CD8-positive, alpha-beta T cell (primary cell): ENCODE measurements at regions of chr17 and their contacts with region 1.

Region 1: GRCh38 chr17:64420143-64420971 is 28.6 kb upstream of the MILR1 start:
- DNase-seq: peak in 5 of 9 experiments; percentile 27 to 85 (median 62)
- ATAC-seq: peak; percentile 88
- H3K4me3 ChIP-seq: no peak overlapping the region
- H3K4me3 Mint-ChIP-seq: no peak overlapping the region
- H3K27ac ChIP-seq: no peak overlapping the region
- H3K27ac Mint-ChIP-seq: no peak overlapping the region
- H3K4me1 ChIP-seq: peaks cover 4% of the 10 kb centered on the region
- H3K4me1 Mint-ChIP-seq: peaks cover 2% of the 10 kb centered on the region
- H3K27me3 ChIP-seq: no peaks in the 10 kb centered on the region
- H3K27me3 Mint-ChIP-seq: no peaks in the 10 kb centered on the region
- CTCF ChIP-seq: peak; percentile 80

Region 2: DNA sequence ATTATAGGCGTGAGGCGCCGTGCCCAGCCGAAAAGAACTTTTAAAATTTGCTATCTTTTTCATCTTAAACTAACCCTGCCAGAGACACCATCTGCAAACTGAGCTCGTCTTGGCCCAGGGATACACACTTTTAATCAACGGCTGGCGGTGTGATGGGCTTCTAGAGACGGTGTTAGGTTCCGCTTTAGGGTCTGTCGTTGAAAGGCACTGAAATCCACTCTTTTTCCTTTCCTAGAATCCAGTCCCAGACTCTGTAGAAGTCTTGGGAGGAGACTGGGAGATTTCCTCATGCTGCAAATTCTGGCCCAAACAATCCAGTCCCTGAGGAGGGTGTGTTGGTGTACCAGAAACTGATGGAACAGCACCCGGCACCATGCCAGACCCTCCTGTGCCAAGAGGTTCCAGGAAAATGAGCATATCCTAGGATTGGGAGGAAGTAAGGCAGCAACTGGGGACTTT is 105.3 kb before region 1 on chr17:
- CTCF ChIA-PET with region 1: interaction called, 271 read pairs
- POLR2A ChIA-PET with region 1: no interaction called
- intact Hi-C with region 1: no loop called
- DNase-seq: no peak
- ATAC-seq: no peak
- H3K4me3 ChIP-seq: no peak overlapping the region
- H3K4me3 Mint-ChIP-seq: no peak overlapping the region
- H3K27ac ChIP-seq: no peak overlapping the region
- H3K27ac Mint-ChIP-seq: no peak overlapping the region
- H3K4me1 ChIP-seq: no peaks in the 10 kb centered on the region
- H3K4me1 Mint-ChIP-seq: peaks cover 10% of the 10 kb centered on the region
- H3K27me3 ChIP-seq: no peaks in the 10 kb centered on the region
- H3K27me3 Mint-ChIP-seq: no peaks in the 10 kb centered on the region
- CTCF ChIP-seq: no peak

Region 3: GRCh38 chr17:64378890-64379354 is 41.4 kb before region 1 on chr17:
- CTCF ChIA-PET with region 1: interaction called, 45 read pairs
- POLR2A ChIA-PET with region 1: no interaction called
- intact Hi-C with region 1: loop called (anchors 5 kb)
- DNase-seq: no peak
- ATAC-seq: no peak
- H3K4me3 ChIP-seq: no peak overlapping the region
- H3K4me3 Mint-ChIP-seq: no peak overlapping the region
- H3K27ac ChIP-seq: no peak overlapping the region
- H3K27ac Mint-ChIP-seq: peak overlapping the region; percentile 34
- H3K4me1 ChIP-seq: peaks cover 25% of the 10 kb centered on the region
- H3K4me1 Mint-ChIP-seq: peaks cover 52% of the 10 kb centered on the region
- H3K27me3 ChIP-seq: no peaks in the 10 kb centered on the region
- H3K27me3 Mint-ChIP-seq: no peaks in the 10 kb centered on the region
- CTCF ChIP-seq: no peak

Region 4: GRCh38 chr17:64455993-64456885 is 35.9 kb after region 1 on chr17:
- CTCF ChIA-PET with region 1: interaction called, 13 read pairs
- POLR2A ChIA-PET with region 1: no interaction called
- intact Hi-C with region 1: no loop called
- DNase-seq: peak in 2 of 9 experiments; percentile 40 to 53
- ATAC-seq: peak; percentile 70
- H3K4me3 ChIP-seq: no peak overlapping the region
- H3K4me3 Mint-ChIP-seq: peak overlapping the region; percentile 35
- H3K27ac ChIP-seq: peak overlapping the region in 1 of 2 experiments; percentile 45
- H3K27ac Mint-ChIP-seq: peak overlapping the region; percentile 84
- H3K4me1 ChIP-seq: peaks cover 14% of the 10 kb centered on the region
- H3K4me1 Mint-ChIP-seq: peaks cover 24% of the 10 kb centered on the region
- H3K27me3 ChIP-seq: no peaks in the 10 kb centered on the region
- H3K27me3 Mint-ChIP-seq: peaks cover 2% of the 10 kb centered on the region
- CTCF ChIP-seq: no peak

Region 5: DNA sequence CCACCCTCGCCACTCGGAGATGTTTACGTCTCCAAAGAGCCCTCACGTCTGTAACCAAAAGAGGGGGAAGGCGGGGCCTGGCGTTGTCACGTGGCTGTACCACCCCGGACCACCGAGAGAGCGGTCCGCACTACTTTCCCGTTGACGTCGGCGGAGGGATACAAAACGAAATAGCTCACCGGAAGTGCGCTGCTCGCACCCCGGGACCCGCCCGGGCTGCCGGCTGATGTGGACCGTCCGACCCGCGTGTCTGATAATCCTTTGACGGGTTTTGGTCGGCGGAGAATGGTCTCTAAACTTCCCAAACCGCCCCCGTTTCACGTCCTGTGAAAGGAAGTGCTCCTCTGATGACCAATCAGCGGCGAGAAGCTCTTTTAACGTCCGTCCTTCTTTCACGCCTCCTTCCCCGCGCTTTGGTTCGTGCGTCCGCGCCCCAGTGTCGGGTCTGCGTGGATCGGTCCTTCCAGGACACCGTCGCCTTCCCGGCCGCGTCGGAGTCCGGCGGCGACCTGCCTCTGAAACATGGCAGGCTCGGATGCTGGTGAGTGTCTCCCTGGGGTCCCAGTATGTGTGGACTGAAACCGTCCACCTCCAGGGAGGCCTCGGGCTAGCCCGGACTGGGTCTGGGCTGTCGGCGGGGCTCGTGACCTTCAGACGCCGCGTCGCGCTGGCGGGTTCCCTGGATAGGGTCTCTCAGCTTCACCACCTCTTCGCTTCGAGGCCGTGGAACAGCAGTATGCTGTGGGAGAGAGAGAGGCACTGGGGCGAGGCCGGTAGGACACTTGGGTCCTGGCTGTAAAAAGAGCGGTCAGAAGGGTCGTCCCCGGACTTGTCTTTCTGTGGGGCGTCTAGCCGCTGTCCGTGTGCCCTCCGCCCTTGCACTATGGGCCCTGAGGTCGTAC is 86.5 kb after region 1 on chr17 and contains the start of gene CEP95:
- CTCF ChIA-PET with region 1: interaction called, 40 read pairs
- POLR2A ChIA-PET with region 1: interaction called, 61 read pairs
- intact Hi-C with region 1: loop called (anchors 1 kb)
- DNase-seq: peak; percentile 90 to 99 (median 96)
- ATAC-seq: peak; percentile 64
- H3K4me3 ChIP-seq: peak within 1 kb of the TSS; percentile 99 to 100
- H3K4me3 Mint-ChIP-seq: peak within 1 kb of the TSS; percentile 100
- H3K27ac ChIP-seq: peak within 1 kb of the TSS; percentile 100
- H3K27ac Mint-ChIP-seq: peak within 1 kb of the TSS; percentile 100
- H3K4me1 ChIP-seq: peaks cover 44% of the 10 kb centered on the region
- H3K4me1 Mint-ChIP-seq: peaks cover 62% of the 10 kb centered on the region
- H3K27me3 ChIP-seq: no peaks in the 10 kb centered on the region
- H3K27me3 Mint-ChIP-seq: no peaks in the 10 kb centered on the region
- CTCF ChIP-seq: no peak
- total RNA-seq, gene CEP95: 248 to 282 TPM

Region 6: GRCh38 chr17:64653325-64653984 is 233.1 kb after region 1 on chr17:
- CTCF ChIA-PET with region 1: interaction called, 50 read pairs
- POLR2A ChIA-PET with region 1: no interaction called
- intact Hi-C with region 1: loop called (anchors 1 kb)
- DNase-seq: no peak
- ATAC-seq: no peak
- H3K4me3 ChIP-seq: no peak overlapping the region
- H3K4me3 Mint-ChIP-seq: no peak overlapping the region
- H3K27ac ChIP-seq: no peak overlapping the region
- H3K27ac Mint-ChIP-seq: peak overlapping the region; percentile 25
- H3K4me1 ChIP-seq: peaks cover 16% of the 10 kb centered on the region
- H3K4me1 Mint-ChIP-seq: peaks cover 63% of the 10 kb centered on the region
- H3K27me3 ChIP-seq: no peaks in the 10 kb centered on the region
- H3K27me3 Mint-ChIP-seq: no peaks in the 10 kb centered on the region
- CTCF ChIP-seq: no peak